Activated CD4-positive, alpha-beta T cell treated with anti-CD3 and anti-CD28 coated beads, Interleukin-2, amount 10 ng/mL, durations not matched to agents 24 days and 14 days (primary cell): ENCODE measurements at regions of chr15 and their contacts with region 1.

Region 1: DNA sequence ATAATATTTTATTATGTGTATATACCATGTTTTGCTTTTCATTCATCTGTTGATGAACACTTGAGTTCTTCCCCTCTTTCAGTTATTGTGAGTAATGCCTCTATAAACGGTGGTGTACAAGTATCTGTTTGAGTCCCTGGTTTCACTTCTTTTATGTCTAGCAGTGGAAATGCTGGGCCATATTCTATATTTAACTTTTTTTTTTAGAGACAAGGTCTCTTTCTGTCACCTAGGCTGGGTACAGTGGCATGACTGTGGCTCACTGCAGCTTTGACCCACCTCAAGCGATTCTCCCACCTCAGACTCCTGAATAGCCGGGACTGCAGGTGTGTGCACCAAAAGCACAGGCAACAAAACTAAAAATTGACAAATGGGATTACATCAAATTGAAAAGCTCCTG is 19.9 kb downstream of the GOLM2 start:
- DNase-seq: no peak
- H3K4me3 Mint-ChIP-seq: peak overlapping the region; percentile 75
- H3K27ac Mint-ChIP-seq: peak overlapping the region; percentile 98
- H3K4me1 Mint-ChIP-seq: peaks cover 31% of the 10 kb centered on the region
- H3K27me3 Mint-ChIP-seq: no peaks in the 10 kb centered on the region

Region 2: DNA sequence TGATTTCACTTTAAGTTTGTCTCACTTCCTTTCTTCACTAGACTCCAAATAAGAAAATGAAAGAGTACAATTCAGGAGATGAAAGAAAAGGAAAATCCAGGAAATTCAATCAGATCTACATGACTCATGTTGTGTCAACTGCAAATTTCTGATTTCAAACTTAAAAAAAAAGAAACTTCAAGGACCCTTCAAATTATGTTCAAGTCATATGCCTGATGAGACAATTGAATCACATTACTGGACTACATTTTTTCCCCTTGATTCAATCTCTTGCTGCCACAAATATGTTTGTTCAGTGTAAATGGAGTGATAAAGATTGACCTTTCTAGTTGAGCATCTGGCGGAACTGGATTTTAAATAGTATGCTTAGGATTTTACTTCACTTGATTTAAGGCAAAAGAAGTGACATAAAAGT is 150.7 kb before region 1 on chr15:
- intact Hi-C with region 1: no loop called
- DNase-seq: no peak
- H3K4me3 Mint-ChIP-seq: no peak overlapping the region
- H3K27ac Mint-ChIP-seq: no peak overlapping the region
- H3K4me1 Mint-ChIP-seq: no peaks in the 10 kb centered on the region
- H3K27me3 Mint-ChIP-seq: peaks cover 32% of the 10 kb centered on the region

Region 3: DNA sequence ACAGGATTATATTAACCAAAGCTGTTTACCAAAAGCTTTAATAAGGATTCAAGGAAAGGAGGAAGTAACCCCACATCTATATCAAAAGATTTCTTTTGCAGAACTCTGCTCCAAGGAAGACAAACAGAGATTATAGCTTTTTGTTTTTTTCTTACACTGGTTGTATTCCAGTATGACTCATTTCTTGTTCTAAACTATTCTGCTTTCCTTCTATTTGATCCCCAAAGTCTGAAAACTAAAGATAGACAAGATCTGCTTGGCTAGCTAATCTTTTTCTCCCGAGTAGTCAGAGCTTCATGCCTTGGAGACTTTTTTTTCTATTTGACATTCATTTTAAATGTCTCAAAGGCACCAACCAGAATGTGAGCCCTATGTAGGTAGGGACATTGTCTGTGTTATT is 76.6 kb before region 1 on chr15:
- intact Hi-C with region 1: no loop called
- DNase-seq: no peak
- H3K4me3 Mint-ChIP-seq: no peak overlapping the region
- H3K27ac Mint-ChIP-seq: no peak overlapping the region
- H3K4me1 Mint-ChIP-seq: no peaks in the 10 kb centered on the region
- H3K27me3 Mint-ChIP-seq: peaks cover 3% of the 10 kb centered on the region

Region 4: GRCh38 chr15:44286814-44287452 is 21.5 kb before region 1 on chr15:
- intact Hi-C with region 1: loop called (anchors 1 kb)
- DNase-seq: peak; percentile 60
- H3K4me3 Mint-ChIP-seq: peak overlapping the region; percentile 88
- H3K27ac Mint-ChIP-seq: peak overlapping the region; percentile 99
- H3K4me1 Mint-ChIP-seq: peaks cover 36% of the 10 kb centered on the region
- H3K27me3 Mint-ChIP-seq: peaks cover 9% of the 10 kb centered on the region

Region 5: DNA sequence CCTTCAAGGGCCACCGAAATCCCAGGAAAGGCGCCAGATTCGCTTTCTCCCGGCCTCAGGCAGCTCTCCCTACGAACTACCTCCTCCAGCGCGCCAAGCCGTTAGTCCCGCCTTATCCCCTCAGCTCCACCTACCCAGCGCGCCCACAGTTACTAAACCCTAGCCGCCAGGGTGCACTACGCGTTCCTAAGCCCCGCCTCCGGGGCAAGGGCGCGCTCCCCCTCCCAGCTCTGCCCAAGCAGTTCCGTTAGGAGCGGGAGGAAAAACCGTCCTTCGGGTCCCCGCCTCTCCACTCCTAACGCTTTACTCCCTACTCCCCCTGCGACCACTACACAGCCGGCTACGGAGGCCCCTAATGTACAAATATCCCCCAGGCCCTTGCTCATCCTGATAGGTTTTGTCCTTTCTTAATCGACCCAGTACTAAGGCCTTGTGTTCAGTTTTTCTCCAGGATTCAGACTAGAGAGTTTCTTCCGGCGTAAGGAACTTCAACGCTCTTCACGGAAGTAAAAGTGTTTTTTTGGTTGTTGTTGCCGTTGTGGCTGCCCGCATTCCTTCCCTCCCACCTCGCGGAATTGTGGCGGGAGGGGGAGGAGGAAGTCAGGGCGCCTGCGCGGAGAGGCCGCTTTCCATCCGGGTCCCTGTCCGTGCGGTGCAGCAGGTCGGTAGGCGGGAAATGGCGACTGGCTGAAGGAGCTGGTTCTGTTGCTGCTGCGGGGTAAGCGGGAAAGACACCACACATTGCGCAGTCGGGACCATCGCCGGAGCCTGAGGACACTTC is 118.8 kb after region 1 on chr15 and contains the start of gene CTDSPL2:
- intact Hi-C with region 1: loop called (anchors 1 kb)
- DNase-seq: peak; percentile 98
- H3K4me3 Mint-ChIP-seq: peak within 1 kb of the TSS; percentile 93
- H3K27ac Mint-ChIP-seq: peak within 1 kb of the TSS; percentile 100
- H3K4me1 Mint-ChIP-seq: peaks cover 45% of the 10 kb centered on the region
- H3K27me3 Mint-ChIP-seq: no peaks in the 10 kb centered on the region
- total RNA-seq, gene CTDSPL2: 67.2 and 69.0 TPM in 2 replicates

Region 6: GRCh38 chr15:44447772-44448376 is 139.5 kb after region 1 on chr15:
- intact Hi-C with region 1: loop called (anchors 1 kb)
- DNase-seq: no peak
- H3K4me3 Mint-ChIP-seq: no peak overlapping the region
- H3K27ac Mint-ChIP-seq: no peak overlapping the region
- H3K4me1 Mint-ChIP-seq: peaks cover 10% of the 10 kb centered on the region
- H3K27me3 Mint-ChIP-seq: no peaks in the 10 kb centered on the region

Region 7: GRCh38 chr15:44536962-44537734 is 228.7 kb after region 1 on chr15 and contains the start of gene EIF3J:
- intact Hi-C with region 1: loop called (anchors 2 kb)
- DNase-seq: peak; percentile 98
- H3K4me3 Mint-ChIP-seq: peak within 1 kb of the TSS; percentile 84
- H3K27ac Mint-ChIP-seq: peak within 1 kb of the TSS; percentile 96
- H3K4me1 Mint-ChIP-seq: peaks cover 43% of the 10 kb centered on the region
- H3K27me3 Mint-ChIP-seq: no peaks in the 10 kb centered on the region
- total RNA-seq, gene EIF3J: 161 and 166 TPM in 2 replicates

Region 8: DNA sequence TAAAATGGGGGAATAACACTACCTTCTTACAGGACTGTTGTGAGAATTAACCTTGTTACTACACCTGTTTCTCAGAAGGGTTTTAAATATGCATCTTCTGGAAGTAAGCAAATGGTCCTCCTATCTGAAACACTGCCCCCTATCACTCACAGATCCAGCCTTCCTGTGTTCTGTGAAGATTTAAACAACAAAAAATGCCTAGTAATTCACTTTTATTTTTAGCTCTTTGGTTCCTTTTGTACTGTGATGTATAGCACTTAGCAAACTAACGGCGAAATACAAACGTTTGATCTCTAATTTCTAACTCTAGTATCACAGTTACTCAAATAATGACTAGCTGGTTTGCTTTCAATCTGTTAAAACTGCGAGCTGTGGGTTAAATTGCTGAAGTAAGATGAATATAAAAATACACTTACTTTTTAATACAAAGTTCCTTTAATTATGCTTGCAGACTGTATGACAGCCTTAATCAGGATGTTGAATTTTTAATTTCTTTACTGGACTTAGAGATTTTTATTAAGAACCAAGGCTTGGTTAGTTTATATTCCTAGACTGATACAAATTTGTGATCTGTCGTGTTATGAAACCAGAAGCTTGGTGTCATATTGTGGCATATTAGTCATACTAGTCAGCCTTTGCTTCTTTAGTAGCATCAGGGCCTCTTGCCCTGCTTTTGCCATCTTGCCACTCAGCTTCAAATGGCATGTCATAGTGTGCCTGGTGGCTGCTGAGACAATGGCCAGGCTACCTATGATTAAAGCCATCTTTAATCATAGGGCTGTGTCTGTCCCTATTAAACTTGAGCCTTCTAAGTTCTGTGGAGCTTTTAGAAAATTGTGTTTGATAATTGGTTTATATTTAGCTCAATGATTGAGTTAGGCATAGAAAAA is 237.7 kb after region 1 on chr15:
- intact Hi-C with region 1: loop called (anchors 2 kb)
- DNase-seq: peak; percentile 75
- H3K4me3 Mint-ChIP-seq: peak overlapping the region; percentile 62
- H3K27ac Mint-ChIP-seq: peak overlapping the region; percentile 84
- H3K4me1 Mint-ChIP-seq: peaks cover 36% of the 10 kb centered on the region
- H3K27me3 Mint-ChIP-seq: no peaks in the 10 kb centered on the region

Region 9: GRCh38 chr15:44728576-44729407 is 420.4 kb after region 1 on chr15:
- intact Hi-C with region 1: loop called (anchors 5 kb)
- DNase-seq: peak; percentile 99
- H3K4me3 Mint-ChIP-seq: peak overlapping the region; percentile 99
- H3K27ac Mint-ChIP-seq: peak overlapping the region; percentile 100
- H3K4me1 Mint-ChIP-seq: peaks cover 64% of the 10 kb centered on the region
- H3K27me3 Mint-ChIP-seq: peaks cover 2% of the 10 kb centered on the region